ENCODE measurements at regions of chr3 and their contacts with region 1.

Region 1: GRCh38 chr3:58167431-58168351 is 43.1 kb downstream of the DNASE1L3 start:
- DNase-seq: peak; percentile 36 to 87
- H3K4me3 ChIP-seq: peak overlapping the region in 1 of 2 donors; percentile 16
- H3K27ac ChIP-seq: peak overlapping the region; percentile 77 to 81
- H3K4me1 ChIP-seq: peaks cover 11 to 41% of the 10 kb centered on the region in 2 donors
- H3K27me3 ChIP-seq: no peaks in the 10 kb centered on the region
- CTCF ChIP-seq: peak; percentile 62 to 94 (median 92)

Region 2: DNA sequence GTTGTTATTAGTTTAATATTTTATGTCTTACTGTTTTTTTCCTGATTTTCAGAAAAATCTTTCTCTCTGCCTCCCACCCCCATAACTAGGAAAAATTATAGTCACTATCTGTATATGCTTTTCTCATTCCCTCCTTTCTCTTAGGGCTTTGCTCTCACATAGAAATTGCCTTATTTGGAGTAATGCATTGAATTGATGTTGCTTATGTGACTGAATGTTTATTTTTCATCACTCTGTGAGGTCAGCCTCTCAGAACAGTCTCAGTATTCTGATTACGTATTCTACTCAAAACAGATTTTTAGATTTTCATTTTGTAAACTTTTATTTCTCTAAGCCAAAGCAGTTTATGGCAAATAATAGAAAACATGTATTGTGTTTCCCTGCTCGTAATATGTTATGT is 290.6 kb before region 1 on chr3:
- intact Hi-C with region 1: loop called (anchors 5 kb)
- DNase-seq: no peak
- H3K4me3 ChIP-seq: no peak overlapping the region
- H3K27ac ChIP-seq: peak overlapping the region; percentile 68 to 69
- H3K4me1 ChIP-seq: peaks cover 0 to 7% of the 10 kb centered on the region in 2 donors
- H3K27me3 ChIP-seq: no peaks in the 10 kb centered on the region
- CTCF ChIP-seq: no peak

Region 3: GRCh38 chr3:58111513-58112186 is 56.0 kb before region 1 on chr3:
- intact Hi-C with region 1: no loop called
- DNase-seq: no peak
- H3K4me3 ChIP-seq: no peak overlapping the region
- H3K27ac ChIP-seq: no peak overlapping the region
- H3K4me1 ChIP-seq: peaks cover 7 to 9% of the 10 kb centered on the region in 2 donors
- H3K27me3 ChIP-seq: no peaks in the 10 kb centered on the region
- CTCF ChIP-seq: no peak

Region 4: GRCh38 chr3:58324391-58325390 is 157.0 kb after region 1 on chr3:
- intact Hi-C with region 1: no loop called
- DNase-seq: no peak
- H3K4me3 ChIP-seq: no peak overlapping the region
- H3K27ac ChIP-seq: peak overlapping the region in 1 of 2 donors; percentile 44
- H3K4me1 ChIP-seq: peaks cover 0 to 2% of the 10 kb centered on the region in 2 donors
- H3K27me3 ChIP-seq: no peaks in the 10 kb centered on the region
- CTCF ChIP-seq: no peak

Measured in ascending aorta (tissue), 2 donors.